ENCODE measurements at regions of chr1 and their contacts with region 1.

Region 1: GRCh38 chr1:9292361-9293240 is at the start of gene SPSB1:
- DNase-seq: peak; percentile 78
- ATAC-seq: peak; percentile 65
- H3K4me3 ChIP-seq: peak within 1 kb of the TSS; percentile 99
- H3K27ac ChIP-seq: peak within 1 kb of the TSS; percentile 82
- H3K4me1 ChIP-seq: peaks cover 27% of the 10 kb centered on the region
- H3K27me3 ChIP-seq: no peaks in the 10 kb centered on the region
- CTCF ChIP-seq: peak; percentile 6; the same call in 1 of the 2 replicates
- POLR2A ChIP-seq: peak; percentile 98
- RAD21 ChIP-seq: no peak; the same call in 1 of the 2 replicates
- total RNA-seq, gene SPSB1: 15.0 and 16.7 TPM in 2 replicates

Region 2: DNA sequence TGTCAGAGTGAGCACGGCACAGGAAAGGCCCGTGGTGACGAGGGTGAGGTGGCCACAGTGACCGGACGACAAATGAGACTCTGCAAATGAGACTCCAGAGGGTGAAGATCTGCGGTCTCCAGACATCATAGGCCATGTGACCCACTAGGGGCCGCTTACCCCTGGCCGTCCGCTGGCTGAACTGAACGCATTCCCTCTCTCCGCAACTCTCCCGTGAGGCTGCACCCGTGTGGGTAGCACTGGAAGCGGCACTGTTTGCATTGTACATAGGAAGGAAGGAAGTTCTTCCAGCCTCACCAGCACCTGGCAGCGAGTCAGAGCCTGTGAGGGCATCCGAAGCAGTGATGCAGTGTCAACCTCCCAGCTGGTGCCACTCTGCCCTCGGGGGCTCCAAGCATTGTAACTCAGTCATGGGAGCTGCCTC is 23.5 kb before region 1 on chr1:
- CTCF ChIA-PET with region 1: interaction called, 8 read pairs
- POLR2A ChIA-PET with region 1: no interaction called
- dilution Hi-C with region 1: no loop called
- in situ Hi-C with region 1: no loop called
- intact Hi-C with region 1: loop called (anchors 1 kb)
- DNase-seq: no peak
- ATAC-seq: no peak
- H3K4me3 ChIP-seq: no peak overlapping the region
- H3K27ac ChIP-seq: no peak overlapping the region
- H3K4me1 ChIP-seq: peaks cover 6% of the 10 kb centered on the region
- H3K27me3 ChIP-seq: no peaks in the 10 kb centered on the region
- CTCF ChIP-seq: no peak
- POLR2A ChIP-seq: no peak
- RAD21 ChIP-seq: no peak

Region 3: GRCh38 chr1:9371391-9371935 is 78.9 kb after region 1 on chr1:
- CTCF ChIA-PET with region 1: no interaction called
- POLR2A ChIA-PET with region 1: no interaction called
- dilution Hi-C with region 1: no loop called
- in situ Hi-C with region 1: no loop called
- intact Hi-C with region 1: loop called (anchors 5 kb)
- DNase-seq: peak; percentile 81
- ATAC-seq: peak; percentile 85
- H3K4me3 ChIP-seq: no peak overlapping the region
- H3K27ac ChIP-seq: no peak overlapping the region
- H3K4me1 ChIP-seq: peaks cover 8% of the 10 kb centered on the region
- H3K27me3 ChIP-seq: no peaks in the 10 kb centered on the region
- CTCF ChIP-seq: no peak
- POLR2A ChIP-seq: no peak
- RAD21 ChIP-seq: no peak

Region 4: GRCh38 chr1:9494929-9495758 is 202.5 kb after region 1 on chr1:
- CTCF ChIA-PET with region 1: interaction called, 26 read pairs
- POLR2A ChIA-PET with region 1: no interaction called
- dilution Hi-C with region 1: no loop called
- in situ Hi-C with region 1: loop called (anchors 5 kb)
- intact Hi-C with region 1: loop called (anchors 1 kb)
- DNase-seq: peak; percentile 32
- ATAC-seq: peak; percentile 79
- H3K4me3 ChIP-seq: peak overlapping the region; percentile 28; the same call in 1 of the 2 replicates
- H3K27ac ChIP-seq: no peak overlapping the region
- H3K4me1 ChIP-seq: no peaks in the 10 kb centered on the region
- H3K27me3 ChIP-seq: peaks cover 2% of the 10 kb centered on the region; the same call in 1 of the 2 replicates
- CTCF ChIP-seq: peak; percentile 85
- POLR2A ChIP-seq: no peak
- RAD21 ChIP-seq: peak; percentile 74

Region 5: GRCh38 chr1:9588551-9589143 is 296.0 kb after region 1 on chr1 and contains the start of gene TMEM201:
- CTCF ChIA-PET with region 1: interaction called, 3 read pairs
- POLR2A ChIA-PET with region 1: no interaction called
- dilution Hi-C with region 1: no loop called
- in situ Hi-C with region 1: no loop called
- intact Hi-C with region 1: loop called (anchors 5 kb)
- DNase-seq: peak; percentile 85
- ATAC-seq: peak; percentile 92
- H3K4me3 ChIP-seq: peak within 1 kb of the TSS; percentile 88
- H3K27ac ChIP-seq: peak within 1 kb of the TSS; percentile 58
- H3K4me1 ChIP-seq: peaks cover 14% of the 10 kb centered on the region
- H3K27me3 ChIP-seq: no peaks in the 10 kb centered on the region
- CTCF ChIP-seq: peak; percentile 87
- POLR2A ChIP-seq: no peak
- RAD21 ChIP-seq: peak; percentile 46; the same call in 1 of the 2 replicates
- total RNA-seq, gene TMEM201: 1.3 and 1.9 TPM in 2 replicates

Measured in IMR-90 (cell line).